ENCODE measurements at regions of chr1 and their contacts with region 1.

Region 1: DNA sequence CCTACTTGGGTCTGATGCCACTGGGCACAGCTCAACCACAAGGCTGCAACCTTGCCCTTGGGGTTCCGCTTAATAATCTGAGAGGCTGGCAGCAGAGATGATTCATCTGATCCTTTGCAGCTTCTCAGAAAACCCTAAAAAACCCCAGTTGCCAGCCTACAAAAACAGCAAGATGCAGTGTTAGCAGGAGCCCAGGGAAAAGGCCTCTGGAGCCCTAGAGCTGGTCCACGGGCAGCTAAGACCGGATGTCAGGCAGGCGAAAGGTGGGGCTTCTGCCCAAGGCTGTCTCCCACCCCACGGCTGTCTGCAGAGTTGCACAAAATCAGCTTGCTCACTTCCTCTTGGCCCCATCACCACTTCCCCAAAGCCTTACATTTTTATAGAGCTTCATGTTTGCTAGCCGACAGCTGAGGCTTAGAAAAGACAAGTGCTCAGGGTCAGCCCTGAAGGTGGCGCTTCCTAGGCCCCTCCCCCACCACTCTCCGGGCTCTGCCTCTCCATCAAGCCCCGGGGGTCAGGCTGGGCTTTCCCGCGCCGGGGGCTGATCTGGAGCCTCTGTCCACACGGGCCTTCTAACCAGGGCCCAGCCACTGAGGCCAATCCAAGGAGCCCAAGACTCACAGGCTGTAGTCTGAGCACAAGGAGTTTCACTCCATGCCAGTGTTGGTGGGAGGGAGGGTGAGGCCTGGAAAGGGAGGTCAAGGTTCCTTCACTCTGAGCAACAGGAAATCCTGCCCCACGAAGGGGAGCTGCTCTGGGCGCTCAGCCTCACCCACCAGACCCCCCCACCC is 4.2 kb upstream of the ADORA3 start:
- DNase-seq: peak; percentile 82
- ATAC-seq: peak; percentile 79
- H3K4me3 ChIP-seq: peak overlapping the region; percentile 69
- H3K27ac ChIP-seq: peak overlapping the region; percentile 99
- H3K4me1 ChIP-seq: peaks cover 58% of the 10 kb centered on the region
- H3K27me3 ChIP-seq: no peaks in the 10 kb centered on the region
- CTCF ChIP-seq: peak in 2 of 3 experiments; percentile 15 to 32; a peak in 1 of 6 replicates
- EP300 ChIP-seq: peak in 1 of 2 experiments; percentile 73; a peak in 2 of 4 replicates
- POLR2A ChIP-seq: peak; percentile 62
- RAD21 ChIP-seq: no peak

Region 2: GRCh38 chr1:111454859-111455641 is 52.6 kb before region 1 on chr1:
- CTCF ChIA-PET with region 1: interaction called, 3 read pairs
- POLR2A ChIA-PET with region 1: no interaction called
- RAD21 ChIA-PET with region 1: interaction called, 13 read pairs
- SMC1A ChIA-PET with region 1: interaction called, 11 read pairs
- in situ Hi-C with region 1: no loop called
- intact Hi-C with region 1: no loop called
- DNase-seq: peak; percentile 24
- ATAC-seq: peak; percentile 77
- H3K4me3 ChIP-seq: peak overlapping the region; percentile 32
- H3K27ac ChIP-seq: peak overlapping the region; percentile 59
- H3K4me1 ChIP-seq: peaks cover 12% of the 10 kb centered on the region; the same call in 1 of the 2 replicates
- H3K27me3 ChIP-seq: no peaks in the 10 kb centered on the region
- CTCF ChIP-seq: no peak
- EP300 ChIP-seq: no peak
- POLR2A ChIP-seq: no peak
- RAD21 ChIP-seq: no peak

Region 3: DNA sequence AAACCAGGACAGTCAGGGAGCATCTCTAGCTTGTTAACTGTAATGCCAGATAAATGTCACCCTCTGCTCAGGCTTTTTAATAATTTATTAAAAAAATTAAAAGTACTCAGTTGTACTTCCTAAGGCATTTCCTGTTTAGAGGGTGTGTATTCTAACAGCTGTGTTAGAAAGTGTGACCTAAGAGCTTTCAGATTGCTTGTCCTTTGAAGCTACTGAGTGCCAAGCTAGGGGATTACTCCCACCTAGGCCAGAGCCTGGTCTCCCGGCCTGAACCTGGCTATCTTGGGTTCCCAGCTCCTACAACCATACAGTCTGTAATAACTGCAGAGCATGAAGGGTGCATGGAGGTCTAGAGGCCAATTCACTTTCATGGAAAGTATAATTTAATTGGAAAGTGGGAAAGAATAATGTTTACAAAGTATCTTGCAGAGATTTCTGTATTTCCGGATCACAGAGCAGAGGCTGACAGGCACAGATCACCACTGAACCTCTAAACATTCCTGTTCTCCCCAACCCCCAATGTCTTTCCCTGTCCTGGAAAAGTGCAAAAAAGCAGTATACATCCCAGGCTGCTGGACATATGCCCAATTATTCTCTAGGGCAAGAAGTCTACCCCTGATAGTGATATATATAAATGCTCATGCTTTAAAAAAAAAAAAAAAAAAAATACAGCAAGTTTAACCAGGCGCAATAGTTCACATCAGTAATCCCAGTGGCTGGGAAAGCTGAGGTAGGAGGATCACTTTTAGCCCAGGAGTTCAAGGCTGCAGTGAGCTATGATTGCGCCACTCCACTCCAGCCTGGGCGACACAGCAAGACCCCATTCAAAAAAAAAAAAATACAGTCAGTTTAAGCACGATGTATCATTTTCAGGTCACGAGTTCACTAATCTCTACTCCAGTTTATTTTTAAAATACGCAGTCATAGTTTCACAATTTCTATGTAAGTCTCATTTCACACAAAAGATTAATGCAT is 75.3 kb after region 1 on chr1:
- CTCF ChIA-PET with region 1: interaction called, 17 read pairs
- POLR2A ChIA-PET with region 1: interaction called, 6 read pairs
- RAD21 ChIA-PET with region 1: interaction called, 105 read pairs
- SMC1A ChIA-PET with region 1: interaction called, 13 read pairs
- in situ Hi-C with region 1: no loop called
- intact Hi-C with region 1: no loop called
- DNase-seq: no peak
- ATAC-seq: peak; percentile 39
- H3K4me3 ChIP-seq: no peak overlapping the region
- H3K27ac ChIP-seq: no peak overlapping the region
- H3K4me1 ChIP-seq: peaks cover 18% of the 10 kb centered on the region
- H3K27me3 ChIP-seq: no peaks in the 10 kb centered on the region
- CTCF ChIP-seq: no peak
- EP300 ChIP-seq: no peak
- POLR2A ChIP-seq: no peak
- RAD21 ChIP-seq: no peak

Region 4: GRCh38 chr1:111639602-111640198 is 132.1 kb after region 1 on chr1:
- CTCF ChIA-PET with region 1: interaction called, 11 read pairs
- POLR2A ChIA-PET with region 1: interaction called, 4 read pairs
- RAD21 ChIA-PET with region 1: interaction called, 9 read pairs
- SMC1A ChIA-PET with region 1: interaction called, 6 read pairs
- in situ Hi-C with region 1: no loop called
- intact Hi-C with region 1: no loop called
- DNase-seq: no peak
- ATAC-seq: no peak
- H3K4me3 ChIP-seq: no peak overlapping the region
- H3K27ac ChIP-seq: no peak overlapping the region
- H3K4me1 ChIP-seq: peaks cover 13% of the 10 kb centered on the region
- H3K27me3 ChIP-seq: no peaks in the 10 kb centered on the region
- CTCF ChIP-seq: no peak
- EP300 ChIP-seq: no peak
- POLR2A ChIP-seq: no peak
- RAD21 ChIP-seq: no peak

Region 5: DNA sequence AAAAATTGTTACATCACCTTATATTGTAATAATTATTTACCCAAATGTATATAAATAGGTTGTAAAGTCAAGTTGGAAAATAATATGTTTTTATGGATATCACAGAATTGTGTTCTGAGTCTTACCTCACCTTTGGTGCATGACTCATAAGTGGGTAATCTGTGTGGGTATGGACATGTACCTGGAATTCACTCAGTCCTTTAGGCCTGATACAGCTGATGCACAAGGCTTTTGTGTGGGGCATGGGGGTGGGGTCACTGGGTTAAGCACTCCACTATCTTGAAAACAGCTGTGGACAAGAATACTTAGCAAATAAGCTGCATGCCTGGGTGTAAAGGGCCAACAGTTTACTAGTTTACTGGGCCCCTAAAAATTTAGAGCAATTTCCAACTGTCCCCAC is 197.2 kb after region 1 on chr1:
- CTCF ChIA-PET with region 1: interaction called, 23 read pairs
- POLR2A ChIA-PET with region 1: interaction called, 5 read pairs
- RAD21 ChIA-PET with region 1: interaction called, 60 read pairs
- SMC1A ChIA-PET with region 1: interaction called, 87 read pairs
- in situ Hi-C with region 1: no loop called
- intact Hi-C with region 1: loop called (anchors 5 kb)
- DNase-seq: no peak
- ATAC-seq: no peak
- H3K4me3 ChIP-seq: no peak overlapping the region
- H3K27ac ChIP-seq: no peak overlapping the region
- H3K4me1 ChIP-seq: peaks cover 7% of the 10 kb centered on the region
- H3K27me3 ChIP-seq: no peaks in the 10 kb centered on the region
- CTCF ChIP-seq: no peak
- EP300 ChIP-seq: no peak
- POLR2A ChIP-seq: no peak
- RAD21 ChIP-seq: no peak

Region 6: DNA sequence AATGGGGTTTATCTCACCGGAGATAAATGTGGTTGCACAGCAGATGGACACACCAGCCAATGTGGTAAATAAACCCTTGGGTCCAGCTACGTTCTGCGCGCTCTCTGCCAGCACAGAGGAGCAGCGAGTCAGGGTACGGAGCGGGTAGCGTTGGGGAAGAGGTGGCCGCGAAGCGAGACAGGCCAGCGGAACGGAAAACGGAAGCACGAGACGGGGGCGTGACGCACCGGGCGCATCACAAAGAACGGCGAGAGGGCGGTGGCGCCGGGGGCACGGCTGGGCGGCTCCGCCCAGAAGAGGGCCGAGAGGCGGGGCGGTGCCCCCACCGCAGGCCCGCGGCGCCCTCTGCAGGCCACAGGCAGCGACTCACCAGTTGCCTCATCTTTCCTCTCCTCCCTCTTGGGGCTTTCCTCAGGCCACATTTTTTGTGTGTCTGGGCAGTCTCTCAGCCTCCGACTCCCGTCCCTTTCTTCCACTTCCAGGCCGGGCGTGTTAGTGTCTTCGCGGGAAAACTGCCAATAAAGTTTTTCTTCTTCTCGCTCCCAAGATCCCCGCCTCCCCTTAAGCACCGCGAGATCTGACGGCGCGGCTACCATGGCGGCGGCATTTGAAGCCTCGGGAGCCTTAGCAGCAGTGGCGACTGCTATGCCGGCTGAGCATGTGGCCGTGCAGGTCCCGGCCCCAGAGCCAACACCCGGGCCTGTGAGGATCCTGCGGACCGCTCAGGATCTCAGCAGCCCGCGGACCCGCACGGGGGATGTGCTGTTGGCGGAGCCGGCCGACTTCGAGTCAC is 247.9 kb after region 1 on chr1 and contains the start of gene DDX20:
- CTCF ChIA-PET with region 1: interaction called, 109 read pairs
- POLR2A ChIA-PET with region 1: interaction called, 10 read pairs
- RAD21 ChIA-PET with region 1: interaction called, 68 read pairs
- SMC1A ChIA-PET with region 1: interaction called, 123 read pairs
- in situ Hi-C with region 1: loop called (anchors 10 kb)
- intact Hi-C with region 1: loop called (anchors 1 kb)
- DNase-seq: peak; percentile 80
- ATAC-seq: peak; percentile 93
- H3K4me3 ChIP-seq: peak within 1 kb of the TSS; percentile 88
- H3K27ac ChIP-seq: peak within 1 kb of the TSS; percentile 87
- H3K4me1 ChIP-seq: peaks cover 3% of the 10 kb centered on the region; the same call in 1 of the 2 replicates
- H3K27me3 ChIP-seq: no peaks in the 10 kb centered on the region
- CTCF ChIP-seq: peak; percentile 84 to 97 (median 93)
- EP300 ChIP-seq: peak; percentile 8 to 58; a peak in 1 of 4 replicates
- POLR2A ChIP-seq: peak; percentile 92
- RAD21 ChIP-seq: peak; percentile 60
- polyA plus RNA-seq, gene DDX20: 7.2 to 10.9 TPM